Activated CD4-positive, alpha-beta T cell treated with anti-CD3 and anti-CD28 coated beads, Interleukin-2, amount 10 ng/mL, durations not matched to agents 7 days and 5 days (primary cell): ENCODE measurements at regions of chr5 and their contacts with region 1.

Region 1: GRCh38 chr5:177478711-177479646 is 5.5 kb upstream of the DBN1 start:
- DNase-seq: peak; percentile 42
- H3K4me3 Mint-ChIP-seq: no peak overlapping the region
- H3K27ac Mint-ChIP-seq: peak overlapping the region; percentile 91
- H3K4me1 Mint-ChIP-seq: peaks cover 49% of the 10 kb centered on the region
- H3K27me3 Mint-ChIP-seq: peaks cover 11% of the 10 kb centered on the region

Region 2: DNA sequence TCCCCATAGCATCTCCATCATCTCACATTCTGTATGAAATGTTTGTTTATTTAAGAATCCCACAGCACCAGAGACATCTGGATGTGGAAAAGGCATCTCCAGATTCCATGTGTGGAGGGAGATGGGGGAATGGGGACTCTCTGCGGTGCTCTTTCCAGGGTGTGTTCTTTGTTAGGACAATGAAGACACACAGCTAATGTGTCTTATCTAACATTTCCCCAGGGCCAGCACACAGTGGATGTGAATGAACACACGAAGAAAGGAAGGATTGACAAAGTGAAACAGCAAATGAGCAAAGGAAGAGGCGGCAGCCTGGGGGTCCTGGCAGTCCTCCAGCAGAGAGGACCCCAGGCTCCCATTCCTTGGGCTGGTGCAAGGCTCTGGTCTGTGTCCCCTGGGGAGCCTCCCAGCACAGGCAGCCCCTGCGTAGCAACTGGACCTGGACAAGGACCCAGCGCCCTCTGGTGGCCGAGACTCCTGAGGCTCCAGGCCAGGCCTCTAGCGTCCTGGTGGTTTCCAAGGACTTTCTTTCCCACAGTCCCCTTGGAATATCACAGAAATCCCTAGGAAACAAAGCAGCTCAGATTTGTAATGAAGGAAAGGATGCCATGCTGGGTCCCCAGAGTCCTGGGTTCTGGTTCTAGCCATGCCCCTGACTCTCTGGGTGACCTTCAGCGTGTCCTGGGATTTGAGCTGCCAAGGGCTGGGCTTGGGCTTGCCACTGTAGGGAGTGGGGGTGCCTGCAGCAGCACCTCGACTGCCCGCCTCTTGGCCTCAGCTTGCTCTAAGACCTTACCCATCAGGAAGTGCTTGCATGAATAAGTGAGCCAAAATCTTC is 21.9 kb after region 1 on chr5:
- CTCF ChIA-PET with region 1: interaction called, 10 read pairs
- POLR2A ChIA-PET with region 1: no interaction called
- DNase-seq: peak; percentile 83
- H3K4me3 Mint-ChIP-seq: no peak overlapping the region
- H3K27ac Mint-ChIP-seq: no peak overlapping the region
- H3K4me1 Mint-ChIP-seq: peaks cover 22% of the 10 kb centered on the region
- H3K27me3 Mint-ChIP-seq: peaks cover 18% of the 10 kb centered on the region